ENCODE measurements at regions of chr12 and their contacts with region 1.

Region 1: GRCh38 chr12:91361864-91362263 is 179.2 kb upstream of the DCN start:
- DNase-seq: peak; percentile 61
- H3K4me3 ChIP-seq: no peak overlapping the region
- H3K27ac ChIP-seq: no peak overlapping the region
- H3K4me1 ChIP-seq: no peaks in the 10 kb centered on the region
- H3K27me3 ChIP-seq: no peaks in the 10 kb centered on the region
- CTCF ChIP-seq: peak; percentile 69

Region 2: GRCh38 chr12:92649511-92650227 is 1287.8 kb after region 1 on chr12:
- CTCF ChIA-PET with region 1: no interaction called
- POLR2A ChIA-PET with region 1: no interaction called
- intact Hi-C with region 1: loop called (anchors 5 kb)
- DNase-seq: peak; percentile 76
- H3K4me3 ChIP-seq: no peak overlapping the region
- H3K27ac ChIP-seq: no peak overlapping the region
- H3K4me1 ChIP-seq: no peaks in the 10 kb centered on the region
- H3K27me3 ChIP-seq: peaks cover 8% of the 10 kb centered on the region
- CTCF ChIP-seq: peak; percentile 75

Measured in A673 (cell line).